ENCODE measurements at regions of chr13 and their contacts with region 1.

Region 1: GRCh38 chr13:30465585-30466357 is at the start of gene HMGB1:
- DNase-seq: peak; percentile 97 to 100 (median 99)
- H3K4me3 ChIP-seq: peak within 1 kb of the TSS in 3 of 4 donors; percentile 71 to 93 (median 76)
- H3K27ac ChIP-seq: peak within 1 kb of the TSS; percentile 98 to 100 (median 99)
- H3K4me1 ChIP-seq: peaks cover 23 to 30% of the 10 kb centered on the region in 2 donors
- H3K27me3 ChIP-seq: no peaks in the 10 kb centered on the region
- CTCF ChIP-seq: no peak
- POLR2A ChIP-seq: peak; percentile 97 to 100
- total RNA-seq, gene HMGB1: 106 to 315 (median 208) TPM

Region 2: DNA sequence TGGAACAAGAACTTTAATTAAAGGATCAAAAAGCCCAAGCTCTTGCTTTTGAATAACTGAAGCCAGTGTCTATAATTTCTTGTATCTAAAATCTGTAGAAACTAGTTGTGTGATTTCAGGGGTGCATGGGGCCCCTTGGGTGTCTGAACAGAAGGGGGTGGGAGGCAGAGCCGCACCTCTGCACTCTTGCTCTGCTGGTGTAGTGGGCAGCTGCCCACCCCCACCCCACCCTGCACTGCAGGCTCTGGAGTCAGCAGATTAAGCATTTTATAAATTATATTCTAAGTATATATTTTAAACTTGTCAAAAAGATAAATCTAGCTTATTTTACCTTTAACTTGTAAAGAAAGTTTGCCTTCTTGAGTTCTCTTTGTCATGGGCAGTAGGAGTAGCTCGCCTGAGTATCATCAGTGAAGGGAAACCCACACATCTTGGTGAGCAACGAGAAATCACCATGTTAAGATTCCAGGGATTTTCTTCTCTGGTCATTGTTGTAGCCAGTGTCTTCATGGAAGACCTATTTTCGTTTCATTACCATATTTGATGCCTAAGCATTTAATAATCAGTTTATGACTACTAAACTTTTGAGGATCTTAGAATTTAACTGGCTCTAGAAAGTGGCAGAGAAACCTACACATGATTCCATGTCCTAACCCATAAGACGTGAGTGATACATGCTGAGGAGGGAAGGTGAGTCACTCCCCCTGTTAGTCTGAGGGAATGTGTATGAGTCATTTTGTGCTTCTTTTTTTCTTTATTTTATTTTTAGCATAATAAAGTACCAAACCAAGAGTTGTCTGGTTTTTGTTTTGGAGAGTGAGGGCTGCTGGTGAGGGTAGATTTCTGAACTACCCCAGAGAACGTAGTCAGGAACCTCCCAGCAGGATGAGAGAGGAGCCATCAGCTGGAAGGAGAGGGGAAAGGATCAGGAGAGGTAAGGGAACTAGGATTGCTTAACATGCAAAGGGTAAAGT is 35.8 kb before region 1 on chr13:
- intact Hi-C with region 1: no loop called
- DNase-seq: peak in 4 of 7 donors; percentile 44 to 64 (median 54)
- H3K4me3 ChIP-seq: no peak overlapping the region
- H3K27ac ChIP-seq: peak overlapping the region in 1 of 5 donors; percentile 52
- H3K4me1 ChIP-seq: peaks cover 0 to 6% of the 10 kb centered on the region in 2 donors
- H3K27me3 ChIP-seq: no peaks in the 10 kb centered on the region
- CTCF ChIP-seq: no peak
- POLR2A ChIP-seq: no peak

Region 3: GRCh38 chr13:30572859-30573275 is 107.1 kb after region 1 on chr13:
- intact Hi-C with region 1: loop called in 1 of 2 experiments (anchors 10 kb)
- DNase-seq: peak in 1 of 7 donors; percentile 25
- H3K4me3 ChIP-seq: peak overlapping the region in 2 of 4 donors; percentile 4 to 49
- H3K27ac ChIP-seq: peak overlapping the region; percentile 2 to 64 (median 45)
- H3K4me1 ChIP-seq: peaks cover 6 to 29% of the 10 kb centered on the region in 2 donors
- H3K27me3 ChIP-seq: no peaks in the 10 kb centered on the region
- CTCF ChIP-seq: peak in 2 of 6 experiments; percentile 14 to 25
- POLR2A ChIP-seq: peak in 1 of 2 donors; percentile 27

Region 4: DNA sequence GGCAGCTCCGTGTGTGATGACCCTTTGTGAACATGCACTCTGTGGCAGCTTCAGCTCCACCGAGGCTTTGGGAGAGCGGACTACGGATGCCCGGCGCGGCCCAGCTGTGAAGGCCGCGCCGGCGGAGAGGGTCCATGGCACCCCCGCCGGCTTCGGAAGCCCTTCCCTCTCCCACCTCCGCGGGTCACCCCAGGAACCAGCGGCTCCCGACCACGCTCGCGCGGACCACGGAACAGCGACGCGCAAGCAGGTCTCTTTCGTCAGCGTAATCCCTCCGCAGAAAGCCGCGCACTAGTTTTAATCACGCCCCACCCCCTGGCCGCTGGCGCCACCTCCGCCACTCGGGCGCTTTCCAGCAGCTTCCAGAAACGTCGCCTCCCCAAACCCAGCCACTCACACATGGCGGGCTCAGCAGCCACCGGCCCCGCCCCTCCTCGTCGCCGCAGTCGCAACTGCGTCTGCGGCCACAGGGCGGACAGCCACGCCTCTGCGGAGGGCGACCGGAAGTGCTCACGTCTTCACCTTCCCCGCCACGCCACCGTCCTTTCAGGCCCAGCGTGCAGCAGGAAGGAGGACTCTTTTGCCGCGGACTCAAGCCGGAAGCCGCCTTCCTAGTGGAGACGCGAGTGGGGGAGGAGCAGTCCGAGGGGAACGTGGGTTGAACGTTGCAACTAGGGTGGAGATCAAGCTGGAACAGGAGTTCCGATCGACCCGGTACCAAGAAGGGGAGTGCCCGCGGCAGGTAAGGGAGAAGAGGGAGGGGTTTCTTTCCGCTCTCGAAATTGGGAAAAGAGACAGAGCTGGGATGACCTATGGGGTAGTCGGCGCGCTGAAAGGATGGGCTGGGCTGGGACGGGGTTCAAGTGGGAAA is 151.8 kb after region 1 on chr13 and contains the start of gene USPL1:
- intact Hi-C with region 1: loop called in 1 of 2 experiments (anchors 10 kb)
- DNase-seq: peak; percentile 98 to 99 (median 99)
- H3K4me3 ChIP-seq: peak within 1 kb of the TSS; percentile 24 to 90 (median 70)
- H3K27ac ChIP-seq: peak within 1 kb of the TSS; percentile 97 to 100 (median 100)
- H3K4me1 ChIP-seq: peaks cover 14 to 32% of the 10 kb centered on the region in 2 donors
- H3K27me3 ChIP-seq: no peaks in the 10 kb centered on the region
- CTCF ChIP-seq: peak; percentile 26 to 88 (median 62)
- POLR2A ChIP-seq: peak; percentile 90 to 92
- total RNA-seq, gene USPL1: 6.3 to 23.8 (median 15.5) TPM

Region 5: DNA sequence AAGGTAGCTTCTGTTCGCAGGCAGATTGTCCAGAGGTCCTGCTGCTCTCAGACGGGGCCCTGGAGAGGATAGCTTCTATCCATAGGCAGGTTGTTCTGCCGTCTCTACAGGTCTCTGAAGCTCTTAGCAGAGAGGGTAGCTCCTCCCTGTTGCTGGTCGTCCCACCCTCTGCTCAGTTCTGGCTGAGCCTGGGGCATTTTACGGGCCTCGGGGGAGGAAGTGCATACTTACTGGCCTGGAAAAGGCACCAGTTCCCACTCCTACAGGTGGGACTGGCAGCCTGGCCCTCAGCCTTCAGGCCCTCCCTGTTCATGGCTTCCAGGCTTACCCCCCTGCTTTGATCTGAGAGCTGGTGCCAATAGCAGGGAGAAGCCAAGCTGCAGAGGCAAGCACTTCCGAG is 194.2 kb after region 1 on chr13:
- intact Hi-C with region 1: no loop called
- DNase-seq: no peak
- H3K4me3 ChIP-seq: no peak overlapping the region
- H3K27ac ChIP-seq: no peak overlapping the region
- H3K4me1 ChIP-seq: no peaks in the 10 kb centered on the region
- H3K27me3 ChIP-seq: no peaks in the 10 kb centered on the region
- CTCF ChIP-seq: no peak
- POLR2A ChIP-seq: no peak

Region 6: GRCh38 chr13:30752201-30752797 is 286.5 kb after region 1 on chr13:
- intact Hi-C with region 1: no loop called
- DNase-seq: peak; percentile 58 to 83 (median 75)
- H3K4me3 ChIP-seq: no peak overlapping the region
- H3K27ac ChIP-seq: peak overlapping the region in 4 of 5 donors; percentile 26 to 82 (median 47)
- H3K4me1 ChIP-seq: peaks cover 4 to 10% of the 10 kb centered on the region in 2 donors
- H3K27me3 ChIP-seq: no peaks in the 10 kb centered on the region
- CTCF ChIP-seq: no peak
- POLR2A ChIP-seq: peak in 1 of 2 donors; percentile 29